CD4-positive, alpha-beta T cell (primary cell): ENCODE measurements at regions of chr2 and their contacts with region 1.

Region 1: DNA sequence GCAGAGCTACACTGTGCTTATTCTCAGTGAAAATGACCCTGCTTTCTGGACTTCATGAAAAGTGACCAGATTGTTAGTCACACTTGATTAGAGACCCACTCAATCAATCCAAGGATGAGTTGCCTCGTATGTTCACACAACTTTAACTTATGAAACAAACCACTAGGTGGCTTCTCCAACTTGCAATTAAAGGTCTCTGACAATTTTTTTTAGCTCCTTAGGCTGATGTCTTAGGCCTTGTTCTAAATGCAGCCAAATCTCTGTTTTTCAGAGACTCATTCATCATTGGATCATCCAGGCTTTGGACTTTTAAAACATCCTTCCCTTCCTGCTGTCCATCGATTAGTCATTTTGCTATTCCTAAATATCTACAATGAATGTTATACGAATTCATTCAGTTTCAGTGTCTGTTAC is 63.4 kb downstream of the MREG start:
- DNase-seq: peak in 3 of 14 experiments; percentile 40 to 51 (median 46)
- ATAC-seq: peak; percentile 54
- H3K4me3 ChIP-seq: no peak overlapping the region
- H3K4me3 Mint-ChIP-seq: no peak overlapping the region
- H3K27ac ChIP-seq: no peak overlapping the region
- H3K27ac Mint-ChIP-seq: no peak overlapping the region
- H3K4me1 ChIP-seq: no peaks in the 10 kb centered on the region
- H3K4me1 Mint-ChIP-seq: no peaks in the 10 kb centered on the region
- H3K27me3 ChIP-seq: no peaks in the 10 kb centered on the region
- H3K27me3 Mint-ChIP-seq: no peaks in the 10 kb centered on the region
- CTCF ChIP-seq: peak; percentile 63

Region 2: DNA sequence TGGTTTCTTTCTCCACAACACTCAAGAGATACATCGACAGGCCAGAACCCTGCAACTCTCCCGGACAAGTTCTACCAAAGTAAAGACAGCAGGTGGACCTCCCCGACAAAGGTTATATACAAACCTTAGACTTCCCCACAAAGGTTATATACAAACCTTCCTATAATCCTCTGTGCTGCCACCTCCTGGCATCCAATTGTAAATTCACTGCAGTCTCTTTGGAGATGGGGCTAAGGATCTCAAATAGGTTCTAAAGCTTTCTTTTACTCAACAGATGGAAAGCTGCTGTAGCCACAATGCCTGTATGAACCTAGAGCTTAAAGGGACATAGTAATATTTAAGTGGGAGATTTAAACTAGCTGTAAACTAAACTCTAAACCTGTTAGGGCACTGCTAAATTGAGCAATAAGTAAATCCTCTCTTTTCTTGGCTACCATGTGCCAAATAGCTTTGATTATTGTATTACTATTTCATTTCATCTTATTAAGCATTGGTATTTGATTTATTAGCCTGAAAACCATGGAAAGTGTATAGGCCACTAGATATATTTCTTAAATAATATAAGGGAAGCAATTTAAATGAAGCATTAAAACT is 73.2 kb after region 1 on chr2:
- CTCF ChIA-PET with region 1: interaction called, 13 read pairs
- POLR2A ChIA-PET with region 1: interaction called, 3 read pairs
- intact Hi-C with region 1: loop called (anchors 1 to 2 kb)
- DNase-seq: peak in 12 of 14 experiments; percentile 15 to 67 (median 29)
- ATAC-seq: peak; percentile 68
- H3K4me3 ChIP-seq: no peak overlapping the region
- H3K4me3 Mint-ChIP-seq: no peak overlapping the region
- H3K27ac ChIP-seq: no peak overlapping the region
- H3K27ac Mint-ChIP-seq: no peak overlapping the region
- H3K4me1 ChIP-seq: no peaks in the 10 kb centered on the region
- H3K4me1 Mint-ChIP-seq: peaks cover 11% of the 10 kb centered on the region
- H3K27me3 ChIP-seq: no peaks in the 10 kb centered on the region
- H3K27me3 Mint-ChIP-seq: no peaks in the 10 kb centered on the region
- CTCF ChIP-seq: peak; percentile 70

Region 3: DNA sequence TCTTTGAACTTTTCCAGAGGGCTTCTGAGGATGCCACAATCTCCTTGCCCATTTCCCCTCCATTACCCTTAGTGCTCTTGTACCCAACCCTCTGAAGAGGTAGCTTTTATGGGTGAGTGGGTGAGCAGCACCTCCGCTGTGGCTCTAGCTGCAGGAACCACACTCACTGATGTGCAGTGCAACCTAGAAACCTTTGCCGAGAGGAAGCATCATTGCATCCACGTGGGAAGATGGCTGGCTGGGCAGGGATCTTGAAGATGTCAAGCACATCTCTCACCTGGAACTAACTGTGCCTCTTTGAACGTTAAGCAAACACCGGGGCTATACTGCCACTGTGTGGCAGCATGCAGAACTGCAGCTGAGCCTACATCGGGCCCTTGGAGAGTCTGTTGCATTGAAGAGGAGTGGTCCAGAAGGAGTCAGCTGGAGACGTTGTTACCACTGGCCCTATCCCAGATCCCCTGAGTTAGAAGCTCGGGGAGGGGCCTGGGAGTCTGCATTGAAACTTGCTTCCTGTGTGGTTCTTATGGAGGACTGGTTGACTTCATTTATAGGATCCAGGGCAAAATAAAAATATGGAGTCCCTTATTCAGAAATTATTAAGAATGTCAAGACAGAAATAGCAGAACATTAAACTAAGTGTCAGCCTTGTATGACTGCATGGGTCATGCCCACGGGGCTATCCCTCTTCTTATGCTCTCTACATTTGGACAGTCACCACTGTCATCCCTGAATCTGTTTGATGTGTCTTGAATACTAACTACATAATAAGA is 716.6 kb after region 1 on chr2:
- CTCF ChIA-PET with region 1: no interaction called
- POLR2A ChIA-PET with region 1: no interaction called
- intact Hi-C with region 1: loop called (anchors 5 to 10 kb)
- DNase-seq: peak; percentile 34 to 79 (median 58)
- ATAC-seq: peak; percentile 90
- H3K4me3 ChIP-seq: no peak overlapping the region
- H3K4me3 Mint-ChIP-seq: no peak overlapping the region
- H3K27ac ChIP-seq: no peak overlapping the region
- H3K27ac Mint-ChIP-seq: no peak overlapping the region
- H3K4me1 ChIP-seq: no peaks in the 10 kb centered on the region
- H3K4me1 Mint-ChIP-seq: no peaks in the 10 kb centered on the region
- H3K27me3 ChIP-seq: peaks cover 0 to 5% of the 10 kb centered on the region in 2 experiments
- H3K27me3 Mint-ChIP-seq: no peaks in the 10 kb centered on the region
- CTCF ChIP-seq: peak; percentile 93